ENCODE measurements at regions of chr3 and their contacts with region 1.

Region 1: GRCh38 chr3:159964166-159964973 is 24.3 kb upstream of the IL12A start:
- DNase-seq: peak in 2 of 3 donors; percentile 20 to 54
- H3K4me3 ChIP-seq: no peak overlapping the region
- H3K4me3 Mint-ChIP-seq: no peak overlapping the region
- H3K27ac ChIP-seq: no peak overlapping the region
- H3K27ac Mint-ChIP-seq: peak overlapping the region in 2 of 7 donors; percentile 26 to 60
- H3K4me1 ChIP-seq: no peaks in the 10 kb centered on the region
- H3K4me1 Mint-ChIP-seq: peaks cover 3% of the 10 kb centered on the region
- H3K27me3 ChIP-seq: no peaks in the 10 kb centered on the region
- H3K27me3 Mint-ChIP-seq: peaks cover 2 to 4% (median 3%) of the 10 kb centered on the region in 3 donors
- CTCF ChIP-seq: no peak

Region 2: DNA sequence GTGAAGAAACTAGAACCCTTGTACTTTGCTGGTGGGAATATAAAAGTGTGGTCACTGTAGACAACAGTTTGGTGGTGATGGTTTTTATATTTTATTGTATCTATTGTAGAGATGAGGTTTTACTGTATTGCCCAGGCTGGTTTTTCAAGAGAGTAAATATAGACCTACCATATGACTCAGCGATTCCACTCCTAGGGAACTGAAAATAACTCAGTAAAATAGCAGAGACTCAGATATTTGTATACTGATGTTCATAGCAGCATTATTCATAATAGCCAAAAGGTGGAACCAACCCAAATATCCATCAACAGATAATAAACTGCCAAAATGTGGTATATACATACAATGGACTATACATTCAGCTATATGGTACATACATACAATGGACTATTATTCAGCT is 44.5 kb before region 1 on chr3:
- intact Hi-C with region 1: loop called in 1 of 2 experiments (anchors 5 kb)
- DNase-seq: peak in 2 of 3 donors; percentile 41 to 50
- H3K4me3 ChIP-seq: no peak overlapping the region
- H3K4me3 Mint-ChIP-seq: no peak overlapping the region
- H3K27ac ChIP-seq: peak overlapping the region in 1 of 2 donors; percentile 1
- H3K27ac Mint-ChIP-seq: peak overlapping the region in 5 of 7 donors; percentile 4 to 75 (median 60)
- H3K4me1 ChIP-seq: peaks cover 45 to 64% of the 10 kb centered on the region in 2 donors
- H3K4me1 Mint-ChIP-seq: peaks cover 56% of the 10 kb centered on the region
- H3K27me3 ChIP-seq: no peaks in the 10 kb centered on the region
- H3K27me3 Mint-ChIP-seq: peaks cover 0 to 2% (median 2%) of the 10 kb centered on the region in 3 donors
- CTCF ChIP-seq: no peak